Heart left ventricle (tissue), 16 donors: ENCODE measurements at regions of chr7 and their contacts with region 1.

Region 1: GRCh38 chr7:108016841-108017775 is 14.1 kb upstream of the LAMB1 start:
- DNase-seq: no peak
- ATAC-seq: peak in 3 of 4 donors; percentile 51 to 58 (median 54)
- H3K4me3 ChIP-seq: no peak overlapping the region
- H3K27ac ChIP-seq: no peak overlapping the region
- H3K4me1 ChIP-seq: peaks cover 0 to 18% (median 0%) of the 10 kb centered on the region in 12 donors
- H3K27me3 ChIP-seq: no peaks in the 10 kb centered on the region
- CTCF ChIP-seq: peak; percentile 23 to 59 (median 44)
- POLR2A ChIP-seq: no peak

Region 2: GRCh38 chr7:107924841-107925504 is 92.1 kb before region 1 on chr7:
- intact Hi-C with region 1: loop called in 1 of 10 experiments (anchors 10 kb)
- DNase-seq: no peak
- ATAC-seq: no peak
- H3K4me3 ChIP-seq: no peak overlapping the region
- H3K27ac ChIP-seq: peak overlapping the region in 5 of 12 donors; percentile 6 to 56 (median 17)
- H3K4me1 ChIP-seq: peaks cover 0 to 41% (median 8%) of the 10 kb centered on the region in 12 donors
- H3K27me3 ChIP-seq: no peaks in the 10 kb centered on the region
- CTCF ChIP-seq: no peak
- POLR2A ChIP-seq: no peak

Region 3: DNA sequence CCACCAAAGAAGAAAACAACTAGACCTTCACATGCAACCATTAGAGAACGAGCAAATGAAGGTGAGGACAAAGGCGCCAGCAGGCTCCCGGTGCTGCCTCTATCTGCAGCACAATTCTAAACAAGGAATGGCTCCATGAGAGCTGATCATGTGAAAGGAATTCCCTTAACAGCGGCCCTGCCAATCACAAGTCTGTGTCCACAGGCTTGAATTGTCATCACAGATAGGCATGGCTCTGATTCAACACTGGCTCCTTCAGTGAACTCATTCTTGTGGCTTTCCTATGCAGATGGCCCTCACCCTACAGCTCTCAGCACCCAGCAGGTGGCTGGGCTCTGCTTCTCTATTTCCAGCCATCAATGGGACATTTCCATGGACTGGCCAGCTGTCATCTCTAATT is 50.4 kb before region 1 on chr7:
- intact Hi-C with region 1: loop called in 1 of 10 experiments (anchors 2 kb)
- DNase-seq: peak in 4 of 5 donors; percentile 64 to 75 (median 72)
- ATAC-seq: peak; percentile 82 to 93 (median 88)
- H3K4me3 ChIP-seq: no peak overlapping the region
- H3K27ac ChIP-seq: peak overlapping the region; percentile 6 to 84 (median 66)
- H3K4me1 ChIP-seq: peaks cover 0 to 56% (median 38%) of the 10 kb centered on the region in 12 donors
- H3K27me3 ChIP-seq: no peaks in the 10 kb centered on the region
- CTCF ChIP-seq: peak in 7 of 12 donors; percentile 7 to 43 (median 36)
- POLR2A ChIP-seq: no peak